Activated naive CD4-positive, alpha-beta T cell treated with anti-CD3 and anti-CD28 coated beads for 36 hours (primary cell): ENCODE measurements at regions of chr16 and their contacts with region 1.

Region 1: GRCh38 chr16:68289621-68290329 is 21.0 kb downstream of the SLC7A6OS start:
- DNase-seq: peak; percentile 81
- H3K4me3 Mint-ChIP-seq: no peak overlapping the region
- H3K27ac Mint-ChIP-seq: peak overlapping the region; percentile 92
- H3K4me1 Mint-ChIP-seq: peaks cover 87% of the 10 kb centered on the region
- H3K27me3 Mint-ChIP-seq: no peaks in the 10 kb centered on the region

Region 2: GRCh38 chr16:68244903-68245853 is 44.6 kb before region 1 on chr16 and contains the start of gene PLA2G15:
- CTCF ChIA-PET with region 1: interaction called, 10 read pairs
- intact Hi-C with region 1: no loop called
- DNase-seq: peak; percentile 97
- H3K4me3 Mint-ChIP-seq: peak within 1 kb of the TSS; percentile 90
- H3K27ac Mint-ChIP-seq: no peak within 1 kb of the TSS
- H3K4me1 Mint-ChIP-seq: peaks cover 20% of the 10 kb centered on the region
- H3K27me3 Mint-ChIP-seq: no peaks in the 10 kb centered on the region
- total RNA-seq, gene PLA2G15: 4.2 to 5.4 TPM

Region 3: DNA sequence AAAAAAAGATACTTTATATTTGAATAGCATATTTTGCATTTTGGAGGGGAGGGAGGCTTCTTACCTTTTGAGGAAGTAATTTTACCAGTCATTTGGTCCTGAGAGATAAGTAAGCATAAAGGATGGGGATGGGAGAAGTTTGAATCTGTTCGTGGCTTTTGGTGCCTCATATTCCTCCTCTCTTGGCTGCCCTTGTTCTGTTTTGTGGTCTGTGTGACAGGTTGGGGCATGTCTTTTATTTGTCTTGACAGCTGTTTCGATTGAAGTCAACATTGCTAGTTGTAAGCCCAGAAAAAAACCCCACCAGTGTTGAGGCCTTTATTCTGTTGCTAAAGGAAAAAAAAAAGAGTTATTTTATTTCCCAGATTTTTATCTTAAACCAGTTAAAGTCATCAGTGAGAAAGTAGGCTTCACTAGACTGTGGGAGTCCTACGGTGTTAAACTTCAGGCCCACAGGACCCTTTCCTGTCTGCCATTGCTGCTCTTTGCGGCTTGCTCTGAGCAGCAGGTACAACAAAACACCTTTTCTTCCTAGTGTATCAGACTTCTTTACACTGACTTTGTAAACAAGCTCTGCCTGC is 14.1 kb before region 1 on chr16:
- CTCF ChIA-PET with region 1: interaction called, 9 read pairs
- intact Hi-C with region 1: loop called (anchors 1 kb)
- DNase-seq: peak; percentile 78
- H3K4me3 Mint-ChIP-seq: peak overlapping the region; percentile 52
- H3K27ac Mint-ChIP-seq: peak overlapping the region; percentile 99
- H3K4me1 Mint-ChIP-seq: peaks cover 74% of the 10 kb centered on the region
- H3K27me3 Mint-ChIP-seq: no peaks in the 10 kb centered on the region

Region 4: GRCh38 chr16:68374246-68374805 is 84.6 kb after region 1 on chr16:
- CTCF ChIA-PET with region 1: no interaction called
- intact Hi-C with region 1: no loop called
- DNase-seq: no peak
- H3K4me3 Mint-ChIP-seq: no peak overlapping the region
- H3K27ac Mint-ChIP-seq: no peak overlapping the region
- H3K4me1 Mint-ChIP-seq: peaks cover 22% of the 10 kb centered on the region
- H3K27me3 Mint-ChIP-seq: no peaks in the 10 kb centered on the region

Region 5: DNA sequence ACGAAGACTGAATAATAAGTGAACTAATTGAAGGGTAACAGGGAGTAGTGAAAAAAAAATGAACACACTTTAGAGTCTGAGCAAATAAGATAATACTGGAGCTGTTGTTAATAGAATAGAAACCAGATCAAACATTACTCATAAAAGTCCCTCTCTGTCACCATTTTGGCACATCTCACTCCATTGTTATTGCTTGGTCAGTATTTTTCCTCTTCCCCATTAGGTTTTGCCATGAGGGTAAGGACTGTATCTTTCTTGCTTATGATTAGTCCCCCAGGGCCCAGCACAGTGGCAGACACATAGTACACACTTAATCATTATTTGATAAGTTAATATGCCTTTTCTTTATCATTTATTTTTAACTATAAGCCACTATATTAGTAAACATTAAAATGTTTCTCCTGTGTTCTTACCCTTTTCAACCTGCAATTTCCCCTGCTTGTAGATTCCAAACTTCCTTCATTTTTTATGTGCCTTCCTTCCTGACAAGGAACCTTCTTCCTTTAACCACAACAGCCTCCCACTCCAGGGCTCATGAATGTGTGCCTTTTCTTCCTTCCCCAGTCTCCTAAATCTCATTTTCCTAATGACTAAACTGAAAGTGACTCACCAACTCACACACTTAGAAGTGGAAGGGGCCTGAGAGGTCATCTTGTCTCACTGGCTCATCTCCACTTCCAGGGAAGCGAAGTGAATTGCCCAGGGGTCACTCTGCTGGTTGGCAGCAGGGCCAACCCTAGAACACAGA is 727.4 kb after region 1 on chr16:
- CTCF ChIA-PET with region 1: no interaction called
- intact Hi-C with region 1: no loop called
- DNase-seq: no peak
- H3K4me3 Mint-ChIP-seq: no peak overlapping the region
- H3K27ac Mint-ChIP-seq: no peak overlapping the region
- H3K4me1 Mint-ChIP-seq: peaks cover 8% of the 10 kb centered on the region
- H3K27me3 Mint-ChIP-seq: no peaks in the 10 kb centered on the region